ENCODE measurements at regions of chr22 and their contacts with region 1.

Region 1: DNA sequence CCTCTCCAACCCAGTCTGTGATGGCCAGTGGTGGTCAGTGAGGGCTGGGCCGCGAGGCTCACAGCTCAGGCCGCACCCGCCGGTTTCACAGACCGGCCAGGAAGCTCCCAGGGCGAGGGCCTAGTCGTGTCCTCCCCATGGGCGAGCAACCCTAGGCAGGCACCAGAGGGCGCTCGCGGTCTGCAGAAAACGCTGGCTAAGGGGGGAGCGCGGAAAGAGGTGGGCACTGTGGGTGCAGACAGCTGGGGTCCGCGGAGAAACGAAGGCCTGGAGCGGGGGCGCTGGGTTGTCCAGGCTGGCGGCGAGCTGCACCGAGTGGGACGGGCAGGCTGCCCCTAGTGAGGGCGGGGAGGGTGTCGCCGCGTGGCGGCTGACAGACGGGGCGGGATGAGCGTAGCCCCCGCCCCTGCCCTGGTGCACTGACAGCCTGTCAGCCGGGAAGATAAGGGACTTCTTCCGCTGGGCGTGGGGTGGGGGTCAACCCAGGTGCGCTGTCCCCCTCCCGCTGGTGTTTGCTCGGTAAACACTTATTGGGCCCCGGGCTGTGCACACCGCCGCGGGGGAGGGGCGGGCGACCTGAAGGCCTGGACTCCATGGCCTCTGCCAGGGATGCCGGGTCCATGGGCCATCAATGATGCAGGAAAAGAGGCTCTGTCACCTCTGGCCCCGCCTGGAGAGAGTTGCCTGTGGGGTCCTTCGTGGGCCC is 7.5 kb downstream of the GP1BB start:
- DNase-seq: peak; percentile 68 to 92 (median 83)
- ATAC-seq: peak; percentile 88
- H3K4me3 ChIP-seq: peak overlapping the region; percentile 64
- H3K4me3 Mint-ChIP-seq: peak overlapping the region; percentile 81 to 89 (median 85)
- H3K27ac ChIP-seq: peak overlapping the region; percentile 4
- H3K27ac Mint-ChIP-seq: peak overlapping the region in 5 of 9 donors; percentile 41 to 85 (median 48)
- H3K4me1 ChIP-seq: no peaks in the 10 kb centered on the region
- H3K4me1 Mint-ChIP-seq: peaks cover 0 to 5% (median 2%) of the 10 kb centered on the region in 7 donors
- H3K27me3 ChIP-seq: no peaks in the 10 kb centered on the region
- H3K27me3 Mint-ChIP-seq: peaks cover 0 to 12% (median 0%) of the 10 kb centered on the region in 5 donors

Region 2: GRCh38 chr22:19756288-19757128 is 25.7 kb after region 1 on chr22:
- CTCF ChIA-PET with region 1: interaction called, 17 read pairs
- POLR2A ChIA-PET with region 1: no interaction called
- intact Hi-C with region 1: loop called in 1 of 2 experiments (anchors 1 kb)
- DNase-seq: peak; percentile 56 to 79 (median 70)
- ATAC-seq: peak; percentile 79
- H3K4me3 ChIP-seq: peak overlapping the region; percentile 39
- H3K4me3 Mint-ChIP-seq: peak overlapping the region; percentile 62 to 89 (median 74)
- H3K27ac ChIP-seq: no peak overlapping the region
- H3K27ac Mint-ChIP-seq: no peak overlapping the region
- H3K4me1 ChIP-seq: peaks cover 8 to 23% of the 10 kb centered on the region in 2 donors
- H3K4me1 Mint-ChIP-seq: peaks cover 19 to 41% (median 25%) of the 10 kb centered on the region in 7 donors
- H3K27me3 ChIP-seq: peaks cover 0 to 11% of the 10 kb centered on the region in 2 donors
- H3K27me3 Mint-ChIP-seq: peaks cover 39 to 67% (median 53%) of the 10 kb centered on the region in 5 donors

Region 3: DNA sequence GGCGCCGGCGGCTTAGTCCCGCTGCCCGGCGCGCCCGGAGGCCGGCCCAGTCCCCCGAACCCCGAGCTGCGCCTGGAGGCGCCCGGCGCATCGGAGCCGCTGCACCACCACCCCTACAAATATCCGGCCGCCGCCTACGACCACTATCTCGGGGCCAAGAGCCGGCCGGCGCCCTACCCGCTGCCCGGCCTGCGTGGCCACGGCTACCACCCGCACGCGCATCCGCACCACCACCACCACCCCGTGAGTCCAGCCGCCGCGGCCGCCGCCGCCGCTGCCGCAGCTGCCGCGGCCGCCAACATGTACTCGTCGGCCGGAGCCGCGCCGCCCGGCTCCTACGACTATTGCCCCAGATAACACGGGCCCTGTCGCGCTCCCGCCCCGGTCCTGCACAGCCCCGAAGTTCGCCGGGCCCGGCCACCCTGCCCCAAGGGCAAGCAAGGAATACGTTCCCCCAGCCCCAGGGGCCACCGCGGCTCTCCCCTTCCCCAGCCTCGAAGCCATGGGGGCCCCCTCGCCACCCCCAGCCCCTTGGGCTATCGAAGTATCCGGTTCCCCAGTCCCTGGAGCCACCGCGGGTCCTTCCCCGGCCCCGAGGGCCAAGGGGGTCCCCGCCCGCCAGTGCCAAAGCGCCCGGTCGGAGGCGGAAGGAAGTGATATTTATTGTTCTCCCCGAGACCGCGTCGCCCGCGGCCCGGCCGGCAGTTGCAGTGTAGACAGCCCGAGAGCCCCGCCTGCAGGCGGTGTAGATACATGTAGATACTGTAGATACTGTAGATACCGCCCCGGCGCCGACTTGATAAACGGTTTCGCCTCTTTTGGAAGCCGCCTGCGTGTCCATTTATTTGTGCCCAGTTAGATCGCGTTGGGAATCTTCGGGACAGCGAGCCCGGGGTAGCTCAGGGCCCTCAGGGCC is 36.0 kb after region 1 on chr22:
- CTCF ChIA-PET with region 1: interaction called, 4 read pairs
- POLR2A ChIA-PET with region 1: no interaction called
- intact Hi-C with region 1: loop called in 1 of 2 experiments (anchors 2 kb)
- DNase-seq: peak in 3 of 9 donors; percentile 23 to 52 (median 31)
- ATAC-seq: peak; percentile 79
- H3K4me3 ChIP-seq: no peak overlapping the region
- H3K4me3 Mint-ChIP-seq: peak overlapping the region in 9 of 10 donors; percentile 25 to 74 (median 43)
- H3K27ac ChIP-seq: no peak overlapping the region
- H3K27ac Mint-ChIP-seq: no peak overlapping the region
- H3K4me1 ChIP-seq: peaks cover 0 to 15% of the 10 kb centered on the region in 2 donors
- H3K4me1 Mint-ChIP-seq: peaks cover 0 to 28% (median 12%) of the 10 kb centered on the region in 7 donors
- H3K27me3 ChIP-seq: peaks cover 9 to 37% of the 10 kb centered on the region in 2 donors
- H3K27me3 Mint-ChIP-seq: peaks cover 45 to 67% (median 53%) of the 10 kb centered on the region in 5 donors

Region 4: GRCh38 chr22:19948057-19948760 is 217.4 kb after region 1 on chr22:
- CTCF ChIA-PET with region 1: interaction called, 27 read pairs
- POLR2A ChIA-PET with region 1: interaction called, 3 read pairs
- intact Hi-C with region 1: loop called (anchors 1 kb)
- DNase-seq: no peak
- ATAC-seq: no peak
- H3K4me3 ChIP-seq: no peak overlapping the region
- H3K4me3 Mint-ChIP-seq: no peak overlapping the region
- H3K27ac ChIP-seq: no peak overlapping the region
- H3K27ac Mint-ChIP-seq: no peak overlapping the region
- H3K4me1 ChIP-seq: peaks cover 2 to 11% of the 10 kb centered on the region in 2 donors
- H3K4me1 Mint-ChIP-seq: peaks cover 11 to 38% (median 28%) of the 10 kb centered on the region in 7 donors
- H3K27me3 ChIP-seq: no peaks in the 10 kb centered on the region
- H3K27me3 Mint-ChIP-seq: no peaks in the 10 kb centered on the region